ENCODE measurements at regions of chr11 and their contacts with region 1.

Region 1: DNA sequence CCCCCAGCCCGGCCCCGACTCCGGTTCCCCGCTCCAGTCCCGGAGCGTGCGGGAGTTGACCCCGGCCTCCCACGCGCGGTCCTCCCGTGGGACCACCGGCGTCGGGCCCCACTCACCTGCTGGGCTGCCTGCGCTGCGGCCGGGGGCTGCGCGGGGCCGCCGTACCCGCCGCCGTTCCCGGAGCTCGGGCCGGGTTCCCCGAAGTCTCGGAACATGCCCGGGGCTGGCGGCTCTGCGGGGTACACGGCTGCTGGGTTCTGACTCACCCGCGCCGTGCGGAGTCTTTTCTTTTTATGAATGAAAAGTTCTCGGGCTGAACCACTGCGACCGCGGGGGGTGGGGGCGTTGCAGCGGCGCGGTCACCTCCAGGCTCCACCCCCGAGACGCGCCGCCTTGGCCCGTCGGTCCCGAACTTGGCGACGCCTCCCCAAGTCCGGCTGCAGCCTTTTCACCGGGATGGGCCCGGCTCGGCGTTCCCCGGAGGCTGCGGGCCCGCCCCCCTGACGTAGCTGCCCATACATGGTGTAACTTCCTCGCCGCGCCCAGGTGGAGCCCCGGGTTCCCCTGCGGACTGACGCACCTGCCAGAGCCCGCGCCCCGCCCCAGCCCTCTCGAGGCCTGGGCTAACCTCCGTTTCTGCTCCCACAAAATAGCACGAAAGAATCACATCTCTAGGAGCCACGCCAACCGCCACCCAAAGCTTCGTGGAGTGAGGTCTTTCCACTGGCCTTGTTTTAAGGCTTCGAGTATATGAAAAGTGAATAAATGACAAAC is at the start of gene FOSL1:
- DNase-seq: peak; percentile 93
- H3K4me3 Mint-ChIP-seq: peak within 1 kb of the TSS; percentile 69
- H3K27ac Mint-ChIP-seq: peak within 1 kb of the TSS; percentile 73
- H3K4me1 Mint-ChIP-seq: peaks cover 55% of the 10 kb centered on the region
- H3K27me3 Mint-ChIP-seq: peaks cover 4% of the 10 kb centered on the region
- total RNA-seq, gene FOSL1: 4.5 to 5.0 TPM

Region 2: GRCh38 chr11:65911682-65912568 is 11.6 kb after region 1 on chr11:
- CTCF ChIA-PET with region 1: no interaction called
- POLR2A ChIA-PET with region 1: interaction called, 41 read pairs
- DNase-seq: no peak
- H3K4me3 Mint-ChIP-seq: no peak overlapping the region
- H3K27ac Mint-ChIP-seq: no peak overlapping the region
- H3K4me1 Mint-ChIP-seq: peaks cover 23% of the 10 kb centered on the region
- H3K27me3 Mint-ChIP-seq: peaks cover 3% of the 10 kb centered on the region

Region 3: GRCh38 chr11:66429983-66430602 is 529.8 kb after region 1 on chr11:
- CTCF ChIA-PET with region 1: no interaction called
- POLR2A ChIA-PET with region 1: no interaction called
- DNase-seq: peak; percentile 79
- H3K4me3 Mint-ChIP-seq: no peak overlapping the region
- H3K27ac Mint-ChIP-seq: no peak overlapping the region
- H3K4me1 Mint-ChIP-seq: no peaks in the 10 kb centered on the region
- H3K27me3 Mint-ChIP-seq: no peaks in the 10 kb centered on the region